Psoas muscle (tissue), 8 donors: ENCODE measurements at regions of chr12 and their contacts with region 1.

Region 1: DNA sequence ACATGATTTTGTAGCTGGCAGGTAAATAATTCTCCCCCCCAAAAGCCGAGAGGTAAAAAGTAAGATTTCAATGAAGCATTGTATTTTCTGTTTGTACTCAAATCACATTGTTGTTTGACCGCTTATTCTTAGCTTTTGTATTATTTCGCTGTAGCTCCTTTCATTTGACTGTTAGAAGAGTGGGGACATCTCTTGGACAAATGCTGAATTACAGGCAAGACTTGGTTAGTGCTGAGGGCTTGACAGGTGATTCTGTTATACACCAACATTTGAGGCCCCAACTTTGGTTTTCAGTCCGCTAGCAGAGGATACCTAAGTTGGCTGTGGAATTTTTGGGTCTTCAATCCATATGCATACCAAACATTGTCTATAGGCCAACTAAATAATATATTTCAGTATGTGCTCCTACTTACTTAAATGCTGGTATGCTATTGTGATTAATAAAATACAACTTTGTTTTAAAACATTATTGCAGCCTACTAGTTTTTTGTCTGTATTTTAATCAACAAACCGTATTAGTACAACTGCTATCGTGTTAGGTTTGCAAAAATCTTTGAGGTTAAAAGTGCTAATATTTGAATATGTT is 102.2 kb downstream of the ERC1 start:
- DNase-seq: no peak
- ATAC-seq: peak in 2 of 4 donors; percentile 53 to 59
- H3K4me3 ChIP-seq: no peak overlapping the region
- H3K27ac ChIP-seq: no peak overlapping the region
- H3K4me1 ChIP-seq: peaks cover 7% of the 10 kb centered on the region
- H3K27me3 ChIP-seq: no peaks in the 10 kb centered on the region
- CTCF ChIP-seq: peak; percentile 63

Region 2: GRCh38 chr12:990661-991349 is 102.5 kb before region 1 on chr12 and contains the start of gene ERC1:
- intact Hi-C with region 1: loop called in 1 of 2 experiments (anchors 5 kb)
- DNase-seq: peak; percentile 92 to 94
- ATAC-seq: peak; percentile 92 to 93 (median 92)
- H3K4me3 ChIP-seq: peak within 1 kb of the TSS; percentile 94
- H3K27ac ChIP-seq: peak within 1 kb of the TSS; percentile 100
- H3K4me1 ChIP-seq: peaks cover 32% of the 10 kb centered on the region
- H3K27me3 ChIP-seq: no peaks in the 10 kb centered on the region
- CTCF ChIP-seq: no peak
- total RNA-seq, gene ERC1: 29.4 to 35.6 (median 33.2) TPM